ENCODE measurements at regions of chrX and their contacts with region 1.

Region 1: DNA sequence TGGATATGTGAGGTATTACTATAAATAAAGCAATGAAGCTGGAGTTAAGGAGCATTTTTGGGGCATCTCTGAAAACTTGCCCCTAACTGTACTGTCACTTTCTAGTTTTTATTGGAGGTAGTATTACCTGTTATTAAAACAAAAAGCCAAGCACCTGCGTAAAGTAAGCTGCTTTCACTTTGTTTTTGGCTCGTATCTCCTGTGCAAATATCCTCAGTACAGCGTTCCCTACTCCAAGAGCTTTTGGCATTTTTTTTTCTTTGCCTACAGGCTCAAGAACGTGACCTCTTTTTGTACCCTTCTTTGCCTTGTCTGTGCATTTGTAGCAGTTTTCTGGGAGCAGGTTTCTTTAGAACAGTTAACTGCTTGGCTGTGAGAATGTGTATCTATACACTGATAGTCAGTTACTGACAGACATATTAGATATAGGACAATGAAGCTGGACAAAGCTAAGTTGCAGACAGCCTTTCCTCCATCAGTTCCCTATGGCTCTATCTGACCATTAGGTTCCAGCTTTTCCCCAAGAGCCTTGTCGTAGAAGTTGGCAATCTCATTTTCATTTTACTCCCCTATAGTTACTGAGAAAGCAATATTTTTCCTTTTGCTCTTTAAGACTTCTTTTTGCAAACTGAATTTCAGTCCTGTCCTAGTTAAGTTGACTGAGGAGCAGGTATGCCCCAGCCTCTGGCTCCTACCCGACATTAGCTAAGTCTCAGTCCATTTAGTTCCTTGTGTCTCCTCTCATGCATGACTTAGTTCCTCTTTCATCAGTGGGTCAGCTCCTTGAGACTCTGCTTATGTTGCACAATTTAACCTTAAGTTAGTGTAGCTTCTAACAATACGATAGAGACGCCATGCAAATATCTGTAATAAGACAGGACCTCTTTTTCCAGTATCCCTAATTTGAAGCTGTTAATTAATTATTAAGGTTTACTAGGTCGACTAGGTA is 71.5 kb upstream of the HPRT1 start:
- DNase-seq: peak; percentile 57
- CTCF ChIP-seq: no peak

Region 2: GRCh38 chrX:134365923-134366322 is 22.5 kb before region 1 on chrX:
- CTCF ChIA-PET with region 1: no interaction called
- POLR2A ChIA-PET with region 1: no interaction called
- DNase-seq: no peak
- CTCF ChIP-seq: no peak

Region 3: DNA sequence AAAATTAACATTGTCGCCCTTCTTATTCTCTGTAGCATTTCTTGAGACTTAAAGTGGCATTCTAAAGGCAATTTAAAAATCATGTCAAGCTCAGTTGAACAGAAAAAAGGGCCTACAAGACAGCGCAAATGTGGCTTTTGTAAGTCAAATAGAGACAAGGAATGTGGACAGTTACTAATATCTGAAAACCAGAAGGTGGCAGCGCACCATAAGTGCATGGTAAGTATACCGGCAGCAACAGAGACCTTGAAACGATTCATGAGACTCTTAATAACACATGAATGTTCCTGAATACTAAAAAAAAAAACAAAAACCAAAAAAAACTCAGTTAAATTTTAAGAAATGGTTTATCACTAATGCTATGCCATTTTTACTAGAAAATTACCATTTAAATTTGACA is 10.9 kb before region 1 on chrX:
- CTCF ChIA-PET with region 1: interaction called, 10 read pairs
- POLR2A ChIA-PET with region 1: interaction called, 5 read pairs
- DNase-seq: no peak
- CTCF ChIP-seq: peak; percentile 22